ENCODE measurements at regions of chr12 and their contacts with region 1.

Region 1: GRCh38 chr12:53213348-53213747 is 6.3 kb upstream of the ITGB7 start:
- DNase-seq: peak; percentile 69
- H3K4me3 ChIP-seq: no peak overlapping the region
- H3K27ac ChIP-seq: no peak overlapping the region
- H3K4me1 ChIP-seq: peaks cover 31% of the 10 kb centered on the region
- H3K27me3 ChIP-seq: no peaks in the 10 kb centered on the region
- CTCF ChIP-seq: peak; percentile 87 to 95
- POLR2A ChIP-seq: no peak

Region 2: DNA sequence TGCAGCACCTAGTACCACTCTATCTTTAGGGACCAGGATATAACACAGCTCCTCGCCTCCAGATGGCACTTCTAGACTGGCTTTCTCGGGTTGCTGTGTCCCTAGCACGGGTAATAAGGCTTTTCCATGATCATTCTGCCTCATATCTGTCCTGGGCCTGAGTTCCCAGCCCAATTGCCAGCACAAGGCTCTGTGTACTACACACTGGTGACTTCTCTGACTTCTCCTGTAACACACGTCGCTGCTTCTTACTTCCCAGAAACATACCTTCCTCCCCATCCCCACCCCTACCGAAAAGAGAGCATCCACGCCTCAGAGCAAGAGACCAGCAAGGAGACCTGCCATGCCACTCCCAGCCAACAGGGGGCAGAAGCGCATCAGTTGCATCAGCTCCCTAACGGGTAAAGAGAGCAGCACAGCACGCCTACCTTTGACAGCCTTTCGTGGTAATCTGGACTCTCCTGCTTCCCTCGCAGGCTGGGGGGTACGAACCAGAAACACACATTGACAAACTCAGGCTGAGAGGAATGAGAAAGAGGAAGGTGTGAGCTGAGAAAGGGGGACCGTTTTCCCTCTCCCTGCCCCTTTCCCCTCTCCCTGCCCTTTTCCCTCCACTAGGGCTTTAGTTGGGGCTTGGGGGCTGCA is 54.0 kb before region 1 on chr12:
- CTCF ChIA-PET with region 1: interaction called, 14 read pairs
- POLR2A ChIA-PET with region 1: no interaction called
- dilution Hi-C with region 1: no loop called
- intact Hi-C with region 1: no loop called
- DNase-seq: peak; percentile 66
- H3K4me3 ChIP-seq: no peak overlapping the region
- H3K27ac ChIP-seq: no peak overlapping the region
- H3K4me1 ChIP-seq: no peaks in the 10 kb centered on the region
- H3K27me3 ChIP-seq: no peaks in the 10 kb centered on the region
- CTCF ChIP-seq: peak; percentile 98 to 99
- POLR2A ChIP-seq: no peak

Region 3: DNA sequence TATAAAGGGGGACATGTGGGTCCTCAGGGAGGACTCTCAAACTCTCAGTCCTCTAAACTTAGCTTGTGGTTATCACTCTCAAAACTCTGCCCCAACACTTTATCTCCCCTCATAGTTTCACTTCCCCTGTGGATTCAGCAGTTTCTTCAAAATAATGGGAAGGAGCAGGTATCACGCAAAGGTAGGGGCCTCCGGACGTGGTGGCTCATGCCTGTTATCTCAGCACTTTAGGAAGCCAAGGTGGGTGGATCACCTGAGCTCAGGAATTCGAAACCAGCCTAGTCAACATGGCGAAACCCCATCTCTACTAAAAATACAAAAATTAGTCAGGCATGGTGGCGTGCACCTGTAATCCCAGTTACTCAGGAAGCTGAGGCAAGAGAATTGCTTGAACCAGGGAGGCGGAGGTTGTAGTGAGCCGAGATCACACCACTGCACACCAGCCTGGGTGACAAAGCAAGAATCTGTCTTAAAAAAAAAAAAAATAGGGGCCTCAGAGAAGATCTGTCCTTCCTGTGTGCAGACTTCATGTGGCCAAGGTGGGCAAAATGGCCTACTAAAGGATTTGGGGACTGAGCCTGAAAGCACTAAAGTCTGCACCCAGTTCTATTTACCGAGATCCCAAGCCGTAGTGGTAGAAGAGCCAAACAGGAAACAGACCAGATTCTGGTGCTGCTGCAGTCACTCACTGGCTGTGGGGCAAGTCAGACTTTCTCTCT is 12.7 kb before region 1 on chr12:
- CTCF ChIA-PET with region 1: interaction called, 34 read pairs
- POLR2A ChIA-PET with region 1: no interaction called
- dilution Hi-C with region 1: no loop called
- intact Hi-C with region 1: no loop called
- DNase-seq: no peak
- H3K4me3 ChIP-seq: no peak overlapping the region
- H3K27ac ChIP-seq: no peak overlapping the region
- H3K4me1 ChIP-seq: peaks cover 6% of the 10 kb centered on the region
- H3K27me3 ChIP-seq: peaks cover 0 to 2% of the 10 kb centered on the region in 2 experiments
- CTCF ChIP-seq: no peak
- POLR2A ChIP-seq: no peak

Region 4: DNA sequence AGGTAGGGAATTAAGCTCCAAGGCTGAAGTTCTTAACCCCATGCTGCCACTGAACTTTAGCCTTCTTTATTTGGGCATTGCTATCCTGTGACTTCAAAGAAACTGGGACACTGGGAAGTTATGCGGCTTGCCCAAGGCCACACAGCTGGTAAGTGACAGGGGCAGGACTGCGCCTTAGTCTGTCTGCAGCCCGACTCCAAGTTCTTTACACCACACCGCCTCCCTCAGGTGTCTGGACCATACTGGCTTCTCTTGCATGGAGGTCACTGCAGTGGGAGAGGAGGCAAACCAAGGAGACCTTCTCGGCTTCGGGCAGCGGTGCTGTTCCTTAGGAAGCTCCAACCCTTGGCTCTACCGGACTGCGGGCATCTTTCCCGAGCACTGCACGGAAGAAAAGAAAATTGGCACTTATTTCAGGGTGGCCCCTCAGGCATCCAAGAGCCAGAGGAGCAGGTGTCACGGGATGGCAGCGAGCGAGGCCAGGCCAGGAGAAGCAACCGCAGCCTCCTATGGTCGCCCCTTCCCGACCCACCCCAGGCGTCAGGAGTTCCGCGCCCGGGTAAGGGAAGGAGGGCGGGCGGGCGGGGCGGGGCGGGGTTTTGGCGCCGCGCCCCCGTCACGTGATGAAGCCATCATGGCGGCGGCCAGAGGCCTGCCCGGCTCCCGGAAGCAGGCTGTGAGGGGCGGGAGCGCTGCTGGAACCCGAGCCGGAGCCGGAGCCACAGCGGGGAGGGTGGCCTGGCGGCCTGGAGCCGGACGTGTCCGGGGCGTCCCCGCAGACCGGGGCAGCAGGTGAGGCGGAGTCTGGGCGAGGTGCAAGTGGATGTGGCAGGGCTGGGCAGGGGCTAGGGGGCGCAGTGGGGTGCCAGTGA is 38.4 kb after region 1 on chr12:
- CTCF ChIA-PET with region 1: interaction called, 54 read pairs
- POLR2A ChIA-PET with region 1: no interaction called
- dilution Hi-C with region 1: no loop called
- intact Hi-C with region 1: loop called (anchors 1 kb)
- DNase-seq: peak; percentile 74
- H3K4me3 ChIP-seq: peak overlapping the region; percentile 78 to 97 (median 84)
- H3K27ac ChIP-seq: peak overlapping the region; percentile 40
- H3K4me1 ChIP-seq: peaks cover 14% of the 10 kb centered on the region
- H3K27me3 ChIP-seq: no peaks in the 10 kb centered on the region
- CTCF ChIP-seq: peak; percentile 23 to 54
- POLR2A ChIP-seq: peak; percentile 83

Region 5: GRCh38 chr12:53277976-53278375 is 64.6 kb after region 1 on chr12:
- CTCF ChIA-PET with region 1: interaction called, 366 read pairs
- POLR2A ChIA-PET with region 1: no interaction called
- dilution Hi-C with region 1: no loop called
- intact Hi-C with region 1: no loop called
- DNase-seq: no peak
- H3K4me3 ChIP-seq: no peak overlapping the region
- H3K27ac ChIP-seq: no peak overlapping the region
- H3K4me1 ChIP-seq: no peaks in the 10 kb centered on the region
- H3K27me3 ChIP-seq: no peaks in the 10 kb centered on the region
- CTCF ChIP-seq: no peak
- POLR2A ChIP-seq: no peak

Region 6: DNA sequence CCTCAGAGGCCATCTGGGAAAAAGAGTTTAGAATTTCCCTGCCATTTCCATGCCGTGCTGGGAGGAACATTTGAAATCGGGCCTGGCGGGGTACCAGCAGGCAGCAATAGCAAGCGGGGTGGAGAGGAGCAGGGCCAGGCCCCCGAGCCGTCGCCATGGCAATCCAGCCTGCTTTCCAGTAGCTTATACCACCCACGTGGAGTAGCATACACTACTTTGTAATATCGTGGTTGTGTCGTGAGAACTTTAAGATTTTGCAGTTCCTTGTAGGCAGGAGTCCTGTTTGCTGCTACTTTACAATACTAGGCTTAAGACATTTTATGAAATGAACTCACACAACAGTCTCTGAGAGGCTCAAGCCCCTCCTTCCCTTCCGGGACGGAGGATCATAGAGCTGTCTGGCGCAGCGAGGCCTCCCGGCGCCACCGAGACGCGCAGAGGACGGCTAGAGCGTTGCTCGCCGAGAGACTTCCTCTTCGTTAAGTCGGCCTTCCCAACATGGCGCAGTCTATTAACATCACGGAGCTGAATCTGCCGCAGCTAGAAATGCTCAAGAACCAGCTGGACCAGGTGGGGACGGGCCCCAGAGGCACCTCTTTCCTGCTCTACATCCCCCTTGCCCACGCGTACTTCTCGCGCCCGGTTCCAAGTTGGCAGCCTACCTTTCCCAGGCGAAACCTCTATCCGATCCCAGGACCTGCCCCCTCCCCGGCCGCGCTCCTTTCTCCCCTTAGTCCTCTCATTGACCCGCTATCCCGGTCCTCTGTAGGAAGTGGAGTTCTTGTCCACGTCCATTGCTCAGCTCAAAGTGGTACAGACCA is 81.9 kb after region 1 on chr12 and contains the start of gene PFDN5:
- CTCF ChIA-PET with region 1: interaction called, 366 read pairs
- POLR2A ChIA-PET with region 1: no interaction called
- dilution Hi-C with region 1: no loop called
- intact Hi-C with region 1: no loop called
- DNase-seq: peak; percentile 96
- H3K4me3 ChIP-seq: peak within 1 kb of the TSS; percentile 71 to 82 (median 82)
- H3K27ac ChIP-seq: peak within 1 kb of the TSS; percentile 63
- H3K4me1 ChIP-seq: peaks cover 31% of the 10 kb centered on the region
- H3K27me3 ChIP-seq: no peaks in the 10 kb centered on the region
- CTCF ChIP-seq: no peak
- POLR2A ChIP-seq: peak; percentile 84
- total RNA-seq, gene PFDN5: 286 and 301 TPM in 2 replicates

Measured in endothelial cell of umbilical vein (primary cell).